ENCODE measurements at regions of chr14 and their contacts with region 1.

Region 1: DNA sequence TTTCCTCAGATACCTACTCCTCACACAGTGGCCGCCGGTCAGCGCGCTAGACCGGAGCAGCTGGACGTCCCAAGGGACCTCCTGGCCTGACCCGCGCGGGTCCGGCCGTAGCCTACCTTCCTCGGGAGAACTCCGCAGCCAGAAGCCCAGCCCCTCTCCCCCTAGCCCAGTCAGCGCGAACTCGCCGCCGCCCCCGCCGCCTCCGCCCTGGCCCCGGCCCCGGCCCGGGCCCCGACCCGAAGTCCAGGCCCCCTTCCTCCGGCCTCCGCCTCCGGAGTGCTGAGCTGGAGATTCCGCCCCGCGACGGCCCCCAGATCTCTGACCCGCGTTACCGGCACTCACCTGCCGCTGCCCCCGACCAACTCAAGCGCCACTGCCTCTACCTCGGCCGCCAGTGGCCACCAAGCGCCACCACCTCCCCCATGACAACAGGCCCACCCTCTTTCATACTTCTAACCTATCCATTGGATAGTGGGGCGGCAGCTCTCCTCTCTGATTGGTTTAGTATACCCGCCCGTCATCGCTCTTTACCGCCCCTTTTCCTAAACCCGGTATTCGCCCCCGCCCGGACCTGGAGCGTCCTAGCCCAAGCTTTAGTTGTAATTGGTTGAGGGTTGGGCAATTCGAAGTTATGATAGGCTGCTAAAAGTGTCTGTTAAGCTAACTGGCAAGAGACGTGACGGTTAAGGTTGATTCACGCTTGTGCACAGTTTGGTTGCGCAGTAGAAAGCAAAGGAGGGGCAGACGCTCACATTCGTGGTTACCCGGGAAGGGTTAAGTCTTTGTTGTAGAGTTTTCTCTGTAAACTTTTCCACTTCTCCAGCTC is at the start of gene NUMB:
- DNase-seq: peak; percentile 99
- H3K4me3 ChIP-seq: peak within 1 kb of the TSS; percentile 62
- H3K4me3 Mint-ChIP-seq: peak within 1 kb of the TSS; percentile 85
- H3K27ac Mint-ChIP-seq: peak within 1 kb of the TSS; percentile 78
- H3K4me1 ChIP-seq: peaks cover 25% of the 10 kb centered on the region
- H3K4me1 Mint-ChIP-seq: peaks cover 41% of the 10 kb centered on the region
- H3K27me3 ChIP-seq: no peaks in the 10 kb centered on the region
- H3K27me3 Mint-ChIP-seq: no peaks in the 10 kb centered on the region
- CTCF ChIP-seq: no peak
- total RNA-seq, gene NUMB: 66.2 and 67.6 TPM in 2 replicates

Region 2: DNA sequence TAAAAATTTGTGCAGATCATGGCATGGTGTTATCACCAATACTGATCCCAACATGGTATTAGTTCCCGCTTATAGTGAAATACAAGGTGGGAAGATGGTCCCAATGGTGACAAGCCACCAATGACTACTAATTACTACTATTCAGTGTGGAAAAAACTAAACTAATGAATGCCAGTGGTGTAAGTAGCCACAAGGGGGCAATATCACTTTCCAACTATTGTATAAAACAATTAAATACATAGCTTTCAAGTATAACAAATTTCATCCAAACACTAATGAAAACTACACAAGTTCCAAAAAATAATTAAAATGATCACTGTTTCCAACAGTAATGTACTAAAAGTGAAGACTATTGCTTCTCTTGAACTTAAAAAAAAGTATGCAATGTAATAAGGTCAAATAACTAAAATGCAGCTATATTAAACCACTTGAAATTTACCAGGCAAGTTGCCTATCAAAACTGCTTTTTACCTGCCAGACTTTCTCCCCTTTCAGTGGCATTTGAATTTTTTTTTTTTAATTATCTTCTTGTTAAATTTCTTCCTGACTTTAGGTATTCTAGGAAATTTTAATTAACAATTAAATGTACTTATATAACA is 163.1 kb before region 1 on chr14:
- CTCF ChIA-PET with region 1: interaction called, 19 read pairs
- POLR2A ChIA-PET with region 1: interaction called, 6 read pairs
- intact Hi-C with region 1: loop called (anchors 5 kb)
- DNase-seq: peak in 1 of 2 experiments; percentile 37
- H3K4me3 ChIP-seq: no peak overlapping the region
- H3K4me3 Mint-ChIP-seq: no peak overlapping the region
- H3K27ac Mint-ChIP-seq: no peak overlapping the region
- H3K4me1 ChIP-seq: peaks cover 23% of the 10 kb centered on the region
- H3K4me1 Mint-ChIP-seq: peaks cover 6% of the 10 kb centered on the region
- H3K27me3 ChIP-seq: no peaks in the 10 kb centered on the region
- H3K27me3 Mint-ChIP-seq: no peaks in the 10 kb centered on the region
- CTCF ChIP-seq: peak; percentile 60 to 63

Region 3: DNA sequence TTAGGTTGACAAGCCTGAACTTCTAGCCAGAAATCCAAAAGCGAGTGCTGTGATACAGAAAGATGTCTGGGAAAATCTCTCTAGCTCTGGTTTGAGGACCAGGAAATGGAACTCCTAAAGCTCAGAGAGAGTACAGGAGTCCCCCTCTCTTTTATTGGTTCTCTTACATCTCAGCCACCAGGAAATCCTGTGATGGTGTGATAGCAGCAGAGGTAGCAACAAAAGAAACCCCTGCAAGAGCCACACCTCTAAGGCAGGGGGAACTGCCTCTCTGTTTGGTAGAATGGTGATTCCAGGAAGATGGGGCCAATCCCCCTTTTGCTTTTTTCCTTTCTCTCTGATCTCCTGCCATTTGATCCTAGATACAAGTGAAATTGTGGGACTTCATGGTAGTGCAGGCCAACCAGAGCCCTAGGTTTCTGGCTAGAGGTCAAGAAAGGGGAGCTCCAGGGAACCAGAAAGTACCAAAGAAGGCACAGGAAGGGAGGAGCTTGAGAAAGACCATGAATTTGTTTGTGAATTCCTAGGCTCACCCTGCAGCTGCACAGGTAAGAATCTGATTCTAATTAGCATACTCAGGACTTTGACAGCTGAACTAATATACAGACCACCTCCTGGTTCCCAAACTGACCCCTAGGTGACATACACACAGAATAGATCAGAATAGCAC is 132.6 kb before region 1 on chr14:
- CTCF ChIA-PET with region 1: no interaction called
- POLR2A ChIA-PET with region 1: interaction called, 7 read pairs
- intact Hi-C with region 1: loop called (anchors 10 kb)
- DNase-seq: no peak
- H3K4me3 ChIP-seq: no peak overlapping the region
- H3K4me3 Mint-ChIP-seq: no peak overlapping the region
- H3K27ac Mint-ChIP-seq: no peak overlapping the region
- H3K4me1 ChIP-seq: peaks cover 45% of the 10 kb centered on the region
- H3K4me1 Mint-ChIP-seq: peaks cover 30% of the 10 kb centered on the region
- H3K27me3 ChIP-seq: no peaks in the 10 kb centered on the region
- H3K27me3 Mint-ChIP-seq: no peaks in the 10 kb centered on the region
- CTCF ChIP-seq: no peak

Region 4: GRCh38 chr14:73428353-73428824 is 30.0 kb before region 1 on chr14:
- CTCF ChIA-PET with region 1: interaction called, 3 read pairs
- POLR2A ChIA-PET with region 1: interaction called, 4 read pairs
- intact Hi-C with region 1: loop called (anchors 1 kb)
- DNase-seq: peak; percentile 42 to 45
- H3K4me3 ChIP-seq: no peak overlapping the region
- H3K4me3 Mint-ChIP-seq: peak overlapping the region; percentile 41
- H3K27ac Mint-ChIP-seq: peak overlapping the region; percentile 82
- H3K4me1 ChIP-seq: peaks cover 32% of the 10 kb centered on the region
- H3K4me1 Mint-ChIP-seq: peaks cover 24% of the 10 kb centered on the region
- H3K27me3 ChIP-seq: no peaks in the 10 kb centered on the region
- H3K27me3 Mint-ChIP-seq: no peaks in the 10 kb centered on the region
- CTCF ChIP-seq: no peak

Region 5: DNA sequence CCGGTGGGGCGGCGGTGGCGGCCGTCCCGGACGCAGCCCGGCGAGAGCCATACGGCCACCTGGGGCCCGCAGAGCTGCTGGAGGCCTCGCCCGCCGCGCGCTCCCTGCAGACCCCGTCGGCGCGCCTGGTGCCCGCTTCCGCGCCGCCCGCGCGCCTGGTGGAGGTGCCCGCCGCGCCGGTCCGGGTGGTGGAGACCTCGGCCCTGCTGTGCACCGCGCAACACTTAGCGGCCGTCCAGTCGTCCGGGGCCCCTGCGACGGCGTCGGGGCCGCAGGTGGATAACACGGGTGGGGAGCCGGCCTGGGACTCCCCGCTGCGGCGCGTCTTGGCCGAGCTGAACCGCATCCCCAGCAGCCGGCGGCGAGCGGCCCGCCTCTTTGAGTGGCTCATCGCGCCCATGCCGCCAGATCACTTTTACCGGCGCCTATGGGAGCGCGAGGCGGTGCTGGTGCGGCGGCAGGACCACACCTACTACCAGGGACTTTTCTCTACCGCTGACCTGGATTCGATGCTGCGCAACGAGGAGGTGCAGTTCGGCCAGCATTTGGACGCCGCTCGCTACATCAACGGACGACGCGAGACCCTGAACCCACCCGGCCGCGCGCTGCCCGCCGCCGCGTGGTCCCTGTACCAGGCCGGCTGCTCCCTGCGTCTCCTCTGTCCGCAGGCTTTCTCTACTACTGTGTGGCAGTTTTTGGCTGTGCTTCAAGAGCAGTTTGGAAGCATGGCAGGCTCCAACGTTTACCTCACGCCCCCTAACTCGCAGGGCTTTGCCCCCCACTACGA is 33.1 kb after region 1 on chr14:
- CTCF ChIA-PET with region 1: no interaction called
- POLR2A ChIA-PET with region 1: interaction called, 12 read pairs
- intact Hi-C with region 1: loop called (anchors 2 kb)
- DNase-seq: peak; percentile 62 to 71
- H3K4me3 ChIP-seq: peak overlapping the region; percentile 71
- H3K4me3 Mint-ChIP-seq: peak overlapping the region; percentile 91
- H3K27ac Mint-ChIP-seq: peak overlapping the region; percentile 86
- H3K4me1 ChIP-seq: peaks cover 18% of the 10 kb centered on the region
- H3K4me1 Mint-ChIP-seq: peaks cover 11% of the 10 kb centered on the region
- H3K27me3 ChIP-seq: no peaks in the 10 kb centered on the region
- H3K27me3 Mint-ChIP-seq: no peaks in the 10 kb centered on the region
- CTCF ChIP-seq: no peak

Region 6: DNA sequence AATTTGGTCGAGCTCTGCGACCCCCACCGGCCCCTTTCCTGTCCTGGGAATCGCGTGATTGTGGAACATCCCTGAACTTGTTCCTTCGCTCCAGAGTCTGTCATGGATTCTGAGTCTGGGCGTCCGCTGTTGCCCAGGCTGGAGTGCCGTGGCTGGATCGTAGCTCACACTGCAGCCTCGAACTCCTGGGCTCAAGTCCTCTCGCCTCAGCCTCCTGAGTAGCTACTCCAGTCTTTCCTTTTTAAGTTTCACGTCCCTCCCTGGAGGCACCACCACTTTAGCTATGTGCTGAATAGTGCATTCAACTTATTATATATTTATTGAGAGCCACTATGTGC is 154.7 kb after region 1 on chr14:
- CTCF ChIA-PET with region 1: no interaction called
- POLR2A ChIA-PET with region 1: no interaction called
- intact Hi-C with region 1: no loop called
- DNase-seq: no peak
- H3K4me3 ChIP-seq: peak overlapping the region; percentile 64
- H3K4me3 Mint-ChIP-seq: peak overlapping the region; percentile 80
- H3K27ac Mint-ChIP-seq: no peak overlapping the region
- H3K4me1 ChIP-seq: peaks cover 8% of the 10 kb centered on the region
- H3K4me1 Mint-ChIP-seq: peaks cover 5% of the 10 kb centered on the region
- H3K27me3 ChIP-seq: no peaks in the 10 kb centered on the region
- H3K27me3 Mint-ChIP-seq: no peaks in the 10 kb centered on the region
- CTCF ChIP-seq: no peak

Region 7: GRCh38 chr14:73802431-73803188 is 344.2 kb after region 1 on chr14:
- CTCF ChIA-PET with region 1: no interaction called
- POLR2A ChIA-PET with region 1: no interaction called
- intact Hi-C with region 1: no loop called
- DNase-seq: peak; percentile 64 to 79
- H3K4me3 ChIP-seq: no peak overlapping the region
- H3K4me3 Mint-ChIP-seq: no peak overlapping the region
- H3K27ac Mint-ChIP-seq: peak overlapping the region; percentile 68
- H3K4me1 ChIP-seq: peaks cover 36% of the 10 kb centered on the region
- H3K4me1 Mint-ChIP-seq: peaks cover 14% of the 10 kb centered on the region
- H3K27me3 ChIP-seq: no peaks in the 10 kb centered on the region
- H3K27me3 Mint-ChIP-seq: no peaks in the 10 kb centered on the region
- CTCF ChIP-seq: no peak

Measured in Caco-2 (cell line).